ENCODE measurements at regions of chr9 and their contacts with region 1.

Region 1: GRCh38 chr9:130990978-130991777 is 17.8 kb upstream of the LAMC3 start:
- DNase-seq: no peak
- ATAC-seq: no peak
- H3K4me3 ChIP-seq: no peak overlapping the region
- H3K27ac ChIP-seq: no peak overlapping the region
- H3K4me1 ChIP-seq: peaks cover 0 to 11% (median 0%) of the 10 kb centered on the region in 9 donors
- H3K27me3 ChIP-seq: peaks cover 0 to 12% (median 7%) of the 10 kb centered on the region in 7 donors
- CTCF ChIP-seq: no peak

Region 2: GRCh38 chr9:130946778-130947617 is 44.2 kb before region 1 on chr9:
- intact Hi-C with region 1: loop called in 2 of 10 experiments (anchors 5 kb)
- DNase-seq: no peak
- ATAC-seq: no peak
- H3K4me3 ChIP-seq: no peak overlapping the region
- H3K27ac ChIP-seq: no peak overlapping the region
- H3K4me1 ChIP-seq: no peaks in the 10 kb centered on the region
- H3K27me3 ChIP-seq: peaks cover 0 to 34% (median 18%) of the 10 kb centered on the region in 7 donors
- CTCF ChIP-seq: no peak

Region 3: DNA sequence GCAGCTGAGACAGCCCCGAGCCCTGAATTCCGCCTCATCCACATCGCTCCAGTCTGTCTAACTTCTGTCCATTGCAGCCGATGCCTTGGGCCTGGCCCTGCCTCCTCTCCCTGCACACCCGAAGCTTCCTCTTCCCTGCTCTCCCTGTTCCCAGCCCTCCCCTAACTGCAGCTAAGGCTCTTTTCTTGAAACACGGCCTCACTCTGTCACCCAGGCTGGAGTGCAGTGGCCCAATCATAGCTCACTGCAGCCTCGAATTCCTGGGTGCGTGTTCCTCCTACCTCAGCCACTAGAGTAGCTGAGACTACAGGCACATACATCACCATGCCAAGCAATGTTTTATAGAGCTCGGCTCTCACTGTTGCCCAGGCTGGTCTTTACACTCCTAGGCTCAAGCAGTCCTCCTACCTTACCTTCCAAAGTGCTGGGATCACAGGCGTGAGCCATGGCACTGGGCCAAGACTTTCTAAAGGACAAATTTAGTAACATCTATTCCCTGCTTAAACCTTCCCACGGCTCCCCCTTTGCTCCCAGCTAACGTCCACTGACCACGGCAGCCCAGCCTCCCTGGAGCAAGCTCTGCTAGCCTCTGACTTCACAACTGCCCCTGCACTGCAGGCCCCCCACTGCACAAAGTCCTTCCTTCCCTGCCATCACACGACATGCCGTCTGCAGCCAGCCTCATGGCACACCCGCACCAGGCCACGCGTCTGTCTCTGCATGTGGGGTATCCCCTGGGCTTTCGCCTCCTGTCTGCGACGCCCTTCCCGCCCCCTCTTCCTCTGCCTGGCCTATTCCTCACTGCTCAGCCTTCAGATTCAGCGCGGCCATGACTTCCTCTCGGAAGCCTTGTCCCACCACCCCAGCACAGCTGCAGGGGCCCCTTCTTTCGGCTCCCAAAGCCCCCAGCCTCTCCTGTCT is 46.4 kb after region 1 on chr9:
- intact Hi-C with region 1: no loop called
- DNase-seq: no peak
- ATAC-seq: peak in 7 of 8 donors; percentile 38 to 70 (median 49)
- H3K4me3 ChIP-seq: no peak overlapping the region
- H3K27ac ChIP-seq: peak overlapping the region in 3 of 10 donors; percentile 24 to 33 (median 28)
- H3K4me1 ChIP-seq: peaks cover 10 to 20% (median 18%) of the 10 kb centered on the region in 9 donors
- H3K27me3 ChIP-seq: peaks cover 0 to 16% (median 0%) of the 10 kb centered on the region in 7 donors
- CTCF ChIP-seq: no peak

Region 4: GRCh38 chr9:132694157-132694556 is 1703.0 kb after region 1 on chr9:
- intact Hi-C with region 1: loop called in 1 of 10 experiments (anchors 5 kb)
- DNase-seq: no peak
- ATAC-seq: no peak
- H3K4me3 ChIP-seq: no peak overlapping the region
- H3K27ac ChIP-seq: no peak overlapping the region
- H3K4me1 ChIP-seq: no peaks in the 10 kb centered on the region
- H3K27me3 ChIP-seq: no peaks in the 10 kb centered on the region
- CTCF ChIP-seq: peak in 3 of 9 donors; percentile 20 to 27 (median 22)